Calu3 (cell line): ENCODE measurements at regions of chr13 and their contacts with region 1.

Region 1: GRCh38 chr13:113373811-113374485 is 10.0 kb upstream of the GRTP1 start:
- DNase-seq: no peak
- H3K4me3 Mint-ChIP-seq: no peak overlapping the region
- H3K27ac Mint-ChIP-seq: no peak overlapping the region
- H3K4me1 Mint-ChIP-seq: no peaks in the 10 kb centered on the region
- H3K27me3 Mint-ChIP-seq: peaks cover 15% of the 10 kb centered on the region
- CTCF ChIP-seq: no peak

Region 2: DNA sequence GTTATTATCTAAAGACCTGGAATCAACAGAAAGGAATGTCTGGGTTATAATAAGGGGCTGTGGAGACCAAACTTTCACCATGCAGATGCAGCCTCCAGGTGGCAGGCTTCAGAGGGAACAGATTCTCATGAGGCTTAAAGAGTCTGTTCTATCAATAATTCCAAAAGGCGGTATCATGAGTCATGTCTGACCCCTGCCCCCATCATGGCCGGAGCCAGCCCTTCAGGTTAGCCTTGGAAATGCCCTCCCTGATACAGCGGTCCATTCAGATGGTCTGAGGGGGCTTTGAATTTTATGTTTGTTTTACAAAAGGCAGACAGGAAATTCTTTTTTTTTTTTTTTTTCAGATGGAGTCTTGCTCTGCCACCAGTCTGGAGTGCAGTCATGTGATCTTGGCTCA is 98.6 kb before region 1 on chr13:
- CTCF ChIA-PET with region 1: no interaction called
- intact Hi-C with region 1: loop called (anchors 1 kb)
- DNase-seq: peak; percentile 50
- H3K4me3 Mint-ChIP-seq: no peak overlapping the region
- H3K27ac Mint-ChIP-seq: no peak overlapping the region
- H3K4me1 Mint-ChIP-seq: peaks cover 6% of the 10 kb centered on the region
- H3K27me3 Mint-ChIP-seq: no peaks in the 10 kb centered on the region
- CTCF ChIP-seq: peak; percentile 21

Region 3: GRCh38 chr13:113337556-113337955 is 36.4 kb before region 1 on chr13:
- CTCF ChIA-PET with region 1: no interaction called
- intact Hi-C with region 1: no loop called
- DNase-seq: no peak
- H3K4me3 Mint-ChIP-seq: no peak overlapping the region
- H3K27ac Mint-ChIP-seq: no peak overlapping the region
- H3K4me1 Mint-ChIP-seq: no peaks in the 10 kb centered on the region
- H3K27me3 Mint-ChIP-seq: no peaks in the 10 kb centered on the region
- CTCF ChIP-seq: no peak